ENCODE measurements at regions of chr14 and their contacts with region 1.

Region 1: GRCh38 chr14:104650057-104650981 is 39.1 kb upstream of the INF2 start:
- DNase-seq: peak; percentile 27 to 87 (median 74)
- ATAC-seq: peak; percentile 92
- H3K4me3 ChIP-seq: peak overlapping the region; percentile 23 to 28
- H3K27ac ChIP-seq: no peak overlapping the region
- H3K4me1 ChIP-seq: peaks cover 0 to 10% of the 10 kb centered on the region in 2 donors
- H3K27me3 ChIP-seq: peaks cover 0 to 7% of the 10 kb centered on the region in 2 donors
- CTCF ChIP-seq: peak; percentile 94 to 96

Region 2: GRCh38 chr14:104373055-104373854 is 277.1 kb before region 1 on chr14:
- intact Hi-C with region 1: no loop called
- DNase-seq: peak in 1 of 4 donors; percentile 49
- ATAC-seq: no peak
- H3K4me3 ChIP-seq: no peak overlapping the region
- H3K27ac ChIP-seq: no peak overlapping the region
- H3K4me1 ChIP-seq: no peaks in the 10 kb centered on the region
- H3K27me3 ChIP-seq: peaks cover 0 to 54% of the 10 kb centered on the region in 2 donors
- CTCF ChIP-seq: no peak

Region 3: DNA sequence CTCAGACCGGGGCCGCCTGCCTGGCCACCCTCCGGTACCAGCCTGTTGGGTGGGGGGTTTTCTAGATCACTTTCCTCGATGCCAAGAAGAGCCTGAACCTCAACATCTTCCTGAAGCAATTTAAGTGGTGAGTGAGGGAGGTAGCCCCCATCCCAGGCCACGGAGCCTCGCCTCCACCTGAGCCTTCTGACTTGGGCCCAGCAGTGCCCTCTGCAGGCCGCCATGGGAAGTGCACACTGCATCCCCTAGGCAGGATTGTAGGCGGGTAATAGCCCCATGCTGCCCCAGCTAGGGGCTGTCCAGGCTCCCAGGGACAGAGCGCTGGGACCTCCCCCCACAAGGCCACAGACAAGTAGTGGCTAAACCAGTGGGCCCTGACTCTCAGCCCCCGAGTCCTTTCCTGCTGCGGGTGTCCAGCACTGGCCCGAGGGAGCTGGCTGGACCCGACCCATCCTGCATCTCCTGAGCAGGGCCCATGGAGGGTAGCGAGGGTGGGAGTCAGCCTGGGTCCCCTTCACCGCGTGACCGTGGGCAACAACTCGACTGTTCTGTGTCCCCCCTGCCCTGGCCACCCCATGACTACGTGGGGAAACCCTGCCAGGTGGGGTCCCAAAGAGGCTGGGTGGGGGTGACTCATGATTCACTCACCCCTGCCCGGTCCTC is 58.4 kb after region 1 on chr14:
- intact Hi-C with region 1: loop called (anchors 2 to 10 kb)
- DNase-seq: peak in 1 of 4 donors; percentile 69
- ATAC-seq: peak; percentile 85
- H3K4me3 ChIP-seq: no peak overlapping the region
- H3K27ac ChIP-seq: no peak overlapping the region
- H3K4me1 ChIP-seq: no peaks in the 10 kb centered on the region
- H3K27me3 ChIP-seq: no peaks in the 10 kb centered on the region
- CTCF ChIP-seq: peak; percentile 94 to 98

Measured in left lung (tissue), 14 donors.